Activated CD4-positive, alpha-beta T cell treated with anti-CD3 and anti-CD28 coated beads for 36 hours (primary cell): ENCODE measurements at regions of chr3 and their contacts with region 1.

Region 1: DNA sequence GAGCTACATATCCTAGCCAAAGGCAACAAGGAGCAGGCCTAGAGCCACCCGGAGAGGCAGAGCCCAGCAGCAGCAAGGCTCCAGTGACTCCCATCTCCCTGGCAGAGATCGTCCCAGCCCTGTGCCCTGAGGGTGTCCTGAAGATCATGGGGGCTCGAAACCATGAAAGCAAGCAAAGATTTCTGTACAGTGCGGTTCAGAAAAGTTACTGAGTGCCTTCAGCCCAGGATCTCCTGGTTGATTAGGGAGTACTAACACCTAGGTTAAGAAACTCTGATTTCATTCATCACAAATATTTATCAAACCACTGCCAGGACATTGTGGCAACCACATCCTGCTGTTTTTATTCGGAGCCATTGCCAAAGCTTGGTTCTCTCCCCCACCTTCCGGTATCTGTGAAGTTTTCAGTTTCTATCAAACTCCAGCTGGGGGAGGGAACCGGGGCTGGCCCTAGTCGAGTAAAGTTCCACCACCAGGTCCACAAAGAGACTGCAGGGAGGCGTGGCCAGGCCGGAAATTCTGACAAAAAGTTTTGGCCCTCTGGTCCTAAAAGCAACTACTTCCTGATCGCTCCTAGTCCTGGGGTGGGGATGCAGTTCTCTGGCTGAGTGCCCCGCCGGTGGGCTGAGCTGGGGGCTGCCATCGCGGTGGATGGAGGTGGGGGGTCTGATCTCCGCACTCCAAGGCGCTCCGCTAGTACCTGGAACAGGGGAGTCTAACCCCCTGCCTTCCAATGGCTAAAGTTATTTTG is 1.2 kb downstream of the RAB43 start:
- DNase-seq: peak; percentile 96
- ATAC-seq: peak; percentile 69
- H3K4me3 Mint-ChIP-seq: peak overlapping the region; percentile 91
- H3K27ac Mint-ChIP-seq: peak overlapping the region; percentile 95
- H3K4me1 Mint-ChIP-seq: peaks cover 46% of the 10 kb centered on the region
- H3K27me3 Mint-ChIP-seq: no peaks in the 10 kb centered on the region

Region 2: DNA sequence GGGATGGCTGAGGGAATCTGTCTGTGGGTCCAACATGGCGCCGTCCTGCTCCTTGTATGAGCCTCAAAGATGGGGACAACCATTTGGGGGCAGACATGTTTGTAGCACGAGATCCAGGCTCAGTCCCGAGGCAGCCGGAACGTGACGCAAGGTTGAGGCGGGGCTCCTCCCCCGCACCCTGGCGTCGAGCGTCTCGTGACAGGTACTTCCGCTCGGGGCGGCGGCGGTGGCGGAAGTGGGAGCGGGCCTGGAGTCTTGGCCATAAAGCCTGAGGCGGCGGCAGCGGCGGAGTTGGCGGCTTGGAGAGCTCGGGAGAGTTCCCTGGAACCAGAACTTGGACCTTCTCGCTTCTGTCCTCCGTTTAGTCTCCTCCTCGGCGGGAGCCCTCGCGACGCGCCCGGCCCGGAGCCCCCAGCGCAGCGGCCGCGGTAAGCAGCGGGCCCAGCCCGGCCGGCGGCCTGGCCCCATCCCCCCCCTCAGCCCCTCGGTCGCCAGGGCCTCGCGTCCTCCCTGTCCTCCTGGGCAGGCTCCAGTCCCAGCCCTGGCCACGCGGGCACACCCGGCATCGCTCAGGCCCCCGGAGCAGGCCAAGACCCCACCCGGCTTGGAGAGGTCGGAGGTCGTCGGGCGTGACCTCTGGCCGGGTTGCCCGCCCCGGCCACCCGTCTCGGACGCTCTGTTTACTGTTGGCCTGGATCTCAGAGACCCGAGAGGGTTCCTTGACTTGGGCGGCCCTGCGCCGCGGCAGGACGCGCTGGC is 394.3 kb before region 1 on chr3 and contains the start of gene RAB7A:
- CTCF ChIA-PET with region 1: no interaction called
- POLR2A ChIA-PET with region 1: no interaction called
- intact Hi-C with region 1: loop called in 1 of 2 experiments (anchors 1 kb)
- DNase-seq: peak; percentile 99
- ATAC-seq: peak; percentile 92
- H3K4me3 Mint-ChIP-seq: peak within 1 kb of the TSS; percentile 89
- H3K27ac Mint-ChIP-seq: peak within 1 kb of the TSS; percentile 92
- H3K4me1 Mint-ChIP-seq: peaks cover 52% of the 10 kb centered on the region
- H3K27me3 Mint-ChIP-seq: no peaks in the 10 kb centered on the region
- total RNA-seq, gene RAB7A: 297 to 534 TPM

Region 3: GRCh38 chr3:128969993-128970739 is 150.3 kb before region 1 on chr3:
- CTCF ChIA-PET with region 1: interaction called, 12 read pairs
- POLR2A ChIA-PET with region 1: no interaction called
- intact Hi-C with region 1: no loop called
- DNase-seq: peak; percentile 80
- ATAC-seq: peak; percentile 74
- H3K4me3 Mint-ChIP-seq: no peak overlapping the region
- H3K27ac Mint-ChIP-seq: no peak overlapping the region
- H3K4me1 Mint-ChIP-seq: peaks cover 3% of the 10 kb centered on the region
- H3K27me3 Mint-ChIP-seq: no peaks in the 10 kb centered on the region

Region 4: DNA sequence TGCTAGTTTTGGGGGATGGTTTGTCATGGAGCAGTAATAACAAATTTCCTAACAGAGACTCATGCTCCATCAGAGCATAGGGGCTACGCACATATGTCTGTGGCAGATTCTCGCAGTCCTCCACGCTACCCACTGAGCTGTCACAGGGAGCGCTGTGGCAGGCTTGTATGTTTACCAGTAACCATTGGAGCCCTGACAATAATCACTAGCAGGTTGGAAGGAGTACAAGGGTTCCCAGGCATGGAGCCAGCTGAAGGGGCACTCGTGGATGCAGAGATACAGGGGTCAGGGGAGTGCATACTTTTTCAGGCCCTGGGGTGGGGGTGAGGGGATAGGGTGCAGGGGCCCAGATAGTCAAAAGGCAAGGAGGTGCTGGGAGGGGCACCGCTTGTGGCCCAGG is 67.8 kb before region 1 on chr3:
- CTCF ChIA-PET with region 1: interaction called, 12 read pairs
- POLR2A ChIA-PET with region 1: interaction called, 4 read pairs
- intact Hi-C with region 1: loop called (anchors 1 to 2 kb)
- DNase-seq: no peak
- ATAC-seq: no peak
- H3K4me3 Mint-ChIP-seq: no peak overlapping the region
- H3K27ac Mint-ChIP-seq: no peak overlapping the region
- H3K4me1 Mint-ChIP-seq: peaks cover 10% of the 10 kb centered on the region
- H3K27me3 Mint-ChIP-seq: no peaks in the 10 kb centered on the region

Region 5: DNA sequence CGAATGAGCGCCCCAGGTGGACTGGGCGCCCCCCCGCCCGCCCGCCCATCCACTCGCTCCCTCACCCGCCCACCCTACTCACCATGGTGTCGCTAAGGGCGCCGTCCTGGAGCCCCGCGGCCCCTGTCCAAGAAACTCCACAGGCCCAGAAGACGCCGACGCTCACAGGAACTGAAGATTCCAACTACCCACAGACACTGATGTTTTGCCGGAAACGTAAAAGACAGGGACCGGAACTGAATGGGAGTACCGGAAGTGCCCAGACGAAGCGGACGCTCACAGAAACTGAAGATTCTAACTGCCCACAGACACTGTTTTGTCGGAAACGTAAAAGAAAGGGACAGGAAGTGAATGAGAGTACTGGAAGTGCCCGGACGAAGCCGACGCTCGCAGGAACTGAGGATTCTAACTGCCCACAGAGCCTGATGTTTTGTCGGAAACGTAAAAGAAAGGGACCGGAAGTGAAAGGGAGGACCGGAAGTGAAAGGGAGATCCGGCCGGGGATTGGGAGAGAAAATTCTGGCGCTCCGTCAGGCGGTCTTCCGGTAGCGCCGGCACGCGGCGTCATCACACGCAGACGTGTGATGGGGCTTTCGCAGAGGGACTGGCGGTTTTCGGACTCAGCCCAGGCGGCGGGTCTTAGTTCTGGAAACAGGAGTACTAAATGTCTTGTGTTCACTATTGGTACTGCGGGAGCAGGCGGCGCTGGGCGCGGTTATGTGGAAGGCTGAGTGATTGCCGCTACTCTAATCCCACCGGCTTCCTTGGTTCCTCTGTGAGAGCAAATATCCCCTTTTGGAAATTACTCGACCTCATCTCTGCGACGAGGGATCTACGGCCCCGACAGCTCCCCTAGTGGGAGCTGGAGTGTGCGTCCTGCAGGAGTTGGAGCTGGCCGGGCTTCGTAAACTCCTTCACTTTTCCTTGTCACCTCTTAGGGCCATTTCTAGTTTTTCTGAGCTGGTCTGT is 40.7 kb after region 1 on chr3 and contains the start of gene ISY1:
- CTCF ChIA-PET with region 1: interaction called, 11 read pairs
- POLR2A ChIA-PET with region 1: interaction called, 5 read pairs
- intact Hi-C with region 1: loop called (anchors 1 kb)
- DNase-seq: peak; percentile 93
- ATAC-seq: peak; percentile 81
- H3K4me3 Mint-ChIP-seq: peak within 1 kb of the TSS; percentile 93
- H3K27ac Mint-ChIP-seq: peak within 1 kb of the TSS; percentile 98
- H3K4me1 Mint-ChIP-seq: peaks cover 30% of the 10 kb centered on the region
- H3K27me3 Mint-ChIP-seq: no peaks in the 10 kb centered on the region
- total RNA-seq, gene ISY1: 44.9 to 65.5 TPM

Region 6: DNA sequence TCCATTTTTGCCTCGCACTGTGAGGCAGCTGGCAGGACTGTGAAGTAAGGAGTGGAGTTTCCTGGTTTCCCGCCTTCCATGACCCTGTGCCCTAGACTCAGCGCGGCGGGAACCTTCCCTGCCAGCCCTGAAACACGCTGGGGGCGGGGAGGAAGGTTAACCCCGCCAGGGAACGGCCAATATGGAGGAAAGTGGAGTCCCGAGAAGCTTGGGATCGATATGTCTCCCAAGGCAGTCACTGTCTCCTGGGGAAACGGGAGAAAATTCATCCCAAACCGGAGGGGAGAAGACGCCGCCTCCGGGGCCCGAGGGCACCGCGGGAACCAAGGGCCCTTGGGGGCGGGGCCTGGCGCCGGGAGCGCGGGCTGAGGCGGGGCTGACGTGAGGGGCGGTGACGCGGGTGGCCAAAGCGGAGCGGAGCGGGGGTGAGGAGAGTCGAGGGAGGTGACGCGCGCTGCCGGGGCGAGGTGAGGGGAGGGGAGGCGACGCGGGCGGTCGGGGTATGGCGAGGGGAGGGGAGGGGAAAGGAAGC is 158.1 kb after region 1 on chr3 and contains the start of gene HMCES:
- CTCF ChIA-PET with region 1: no interaction called
- POLR2A ChIA-PET with region 1: interaction called, 5 read pairs
- intact Hi-C with region 1: loop called in 1 of 2 experiments (anchors 1 kb)
- DNase-seq: peak; percentile 98
- ATAC-seq: peak; percentile 84
- H3K4me3 Mint-ChIP-seq: peak within 1 kb of the TSS; percentile 89
- H3K27ac Mint-ChIP-seq: peak within 1 kb of the TSS; percentile 95
- H3K4me1 Mint-ChIP-seq: peaks cover 55% of the 10 kb centered on the region
- H3K27me3 Mint-ChIP-seq: no peaks in the 10 kb centered on the region
- total RNA-seq, gene HMCES: 43.1 to 56.7 TPM

Region 7: DNA sequence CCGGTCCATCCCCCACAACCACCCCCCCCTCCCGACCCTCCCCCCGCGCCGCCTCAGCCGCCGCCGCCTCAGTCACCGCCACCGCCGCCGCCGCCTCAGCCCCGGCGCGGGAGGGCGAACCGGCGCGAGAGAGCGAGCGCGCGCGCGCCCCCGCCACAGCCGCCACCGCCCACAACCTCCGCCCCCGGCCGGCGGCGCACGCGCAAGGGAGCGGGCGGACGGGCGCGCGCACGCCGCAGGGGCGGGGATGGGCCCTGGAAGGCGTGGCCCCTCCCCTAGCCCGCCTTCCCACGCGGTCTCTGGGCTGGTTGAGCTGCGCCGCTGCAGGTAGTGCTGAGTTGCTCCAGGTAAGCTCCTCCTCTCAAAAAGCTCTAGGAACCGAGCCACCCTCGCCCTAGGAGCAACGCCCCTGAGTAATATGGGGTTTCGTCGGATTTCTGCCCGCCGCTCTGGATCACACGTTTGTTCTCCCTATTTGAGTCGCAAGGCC is 773.2 kb after region 1 on chr3 and contains the start of gene TMCC1:
- CTCF ChIA-PET with region 1: no interaction called
- POLR2A ChIA-PET with region 1: no interaction called
- intact Hi-C with region 1: loop called in 1 of 2 experiments (anchors 5 kb)
- DNase-seq: peak; percentile 92
- ATAC-seq: peak; percentile 92
- H3K4me3 Mint-ChIP-seq: peak within 1 kb of the TSS; percentile 86
- H3K27ac Mint-ChIP-seq: peak within 1 kb of the TSS; percentile 85
- H3K4me1 Mint-ChIP-seq: peaks cover 36% of the 10 kb centered on the region
- H3K27me3 Mint-ChIP-seq: no peaks in the 10 kb centered on the region
- total RNA-seq, gene TMCC1: 14.8 to 17.3 TPM